IMR-90 (cell line): ENCODE measurements at regions of chr10 and their contacts with region 1.

Region 1: DNA sequence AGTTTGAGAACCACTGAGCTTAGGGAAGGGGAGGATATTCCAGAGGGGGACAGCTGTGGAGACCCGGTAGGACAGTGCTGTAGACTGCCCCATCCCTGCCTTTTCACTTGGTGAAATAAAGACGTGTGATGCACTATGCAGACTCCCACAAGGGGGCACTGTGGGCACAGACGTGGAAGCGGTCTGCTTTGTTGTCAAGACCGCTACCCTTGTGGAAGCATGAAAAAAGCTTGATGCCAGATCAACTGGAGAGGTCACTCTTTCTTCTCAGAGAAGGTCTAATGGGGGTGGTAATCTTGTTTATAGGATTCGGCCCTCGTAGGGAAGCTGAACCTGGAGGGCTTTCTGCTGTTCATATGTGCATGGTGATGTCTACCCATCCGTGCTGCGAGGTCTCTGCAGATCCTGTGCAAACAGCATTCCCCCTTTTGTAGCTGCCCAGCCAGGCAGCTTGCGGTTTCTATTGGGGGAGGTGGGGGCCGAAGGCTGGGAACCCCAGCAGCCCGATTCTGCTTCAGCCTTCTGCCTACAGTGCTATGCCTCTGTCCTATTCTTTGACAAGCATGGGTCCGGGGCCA is 13.7 kb downstream of the RPS24 start:
- DNase-seq: peak; percentile 87
- ATAC-seq: peak; percentile 87
- H3K4me3 ChIP-seq: no peak overlapping the region
- H3K27ac ChIP-seq: no peak overlapping the region
- H3K4me1 ChIP-seq: peaks cover 15% of the 10 kb centered on the region
- H3K27me3 ChIP-seq: no peaks in the 10 kb centered on the region
- CTCF ChIP-seq: peak; percentile 96
- POLR2A ChIP-seq: no peak
- RAD21 ChIP-seq: peak; percentile 98

Region 2: GRCh38 chr10:77926566-77927401 is 120.6 kb before region 1 on chr10 and contains the start of gene DLG5:
- CTCF ChIA-PET with region 1: no interaction called
- POLR2A ChIA-PET with region 1: interaction called, 11 read pairs
- dilution Hi-C with region 1: no loop called
- in situ Hi-C with region 1: no loop called
- intact Hi-C with region 1: no loop called
- DNase-seq: peak; percentile 52
- ATAC-seq: peak; percentile 94
- H3K4me3 ChIP-seq: peak within 1 kb of the TSS; percentile 99
- H3K27ac ChIP-seq: peak within 1 kb of the TSS; percentile 76
- H3K4me1 ChIP-seq: peaks cover 7% of the 10 kb centered on the region
- H3K27me3 ChIP-seq: no peaks in the 10 kb centered on the region
- CTCF ChIP-seq: no peak
- POLR2A ChIP-seq: 0 out of 2 replicates have a peak, but pooled peaks have one; percentile 32
- RAD21 ChIP-seq: no peak
- total RNA-seq, gene DLG5: 12.7 and 14.7 TPM in 2 replicates

Region 3: GRCh38 chr10:78302989-78303854 is 255.8 kb after region 1 on chr10:
- CTCF ChIA-PET with region 1: no interaction called
- POLR2A ChIA-PET with region 1: no interaction called
- dilution Hi-C with region 1: no loop called
- in situ Hi-C with region 1: loop called (anchors 10 kb)
- intact Hi-C with region 1: loop called (anchors 1 kb)
- DNase-seq: peak; percentile 85
- ATAC-seq: peak; percentile 100
- H3K4me3 ChIP-seq: peak overlapping the region; percentile 62
- H3K27ac ChIP-seq: peak overlapping the region; percentile 69
- H3K4me1 ChIP-seq: peaks cover 3% of the 10 kb centered on the region; the same call in 1 of the 2 replicates
- H3K27me3 ChIP-seq: 0 out of 2 replicates have a peak, but pooled peaks cover 2% of the 10 kb centered on the region
- CTCF ChIP-seq: peak; percentile 75
- POLR2A ChIP-seq: peak; percentile 63; the same call in 1 of the 2 replicates
- RAD21 ChIP-seq: peak; percentile 77

Region 4: GRCh38 chr10:78657163-78657861 is 609.9 kb after region 1 on chr10:
- CTCF ChIA-PET with region 1: interaction called, 3 read pairs
- POLR2A ChIA-PET with region 1: no interaction called
- dilution Hi-C with region 1: no loop called
- in situ Hi-C with region 1: loop called (anchors 10 kb)
- intact Hi-C with region 1: loop called (anchors 1 kb)
- DNase-seq: peak; percentile 43
- ATAC-seq: peak; percentile 88
- H3K4me3 ChIP-seq: no peak overlapping the region
- H3K27ac ChIP-seq: no peak overlapping the region
- H3K4me1 ChIP-seq: 0 out of 2 replicates have a peak, but pooled peaks cover 2% of the 10 kb centered on the region
- H3K27me3 ChIP-seq: peaks cover 5% of the 10 kb centered on the region; the same call in 1 of the 2 replicates
- CTCF ChIP-seq: peak; percentile 73
- POLR2A ChIP-seq: no peak
- RAD21 ChIP-seq: peak; percentile 78

Region 5: DNA sequence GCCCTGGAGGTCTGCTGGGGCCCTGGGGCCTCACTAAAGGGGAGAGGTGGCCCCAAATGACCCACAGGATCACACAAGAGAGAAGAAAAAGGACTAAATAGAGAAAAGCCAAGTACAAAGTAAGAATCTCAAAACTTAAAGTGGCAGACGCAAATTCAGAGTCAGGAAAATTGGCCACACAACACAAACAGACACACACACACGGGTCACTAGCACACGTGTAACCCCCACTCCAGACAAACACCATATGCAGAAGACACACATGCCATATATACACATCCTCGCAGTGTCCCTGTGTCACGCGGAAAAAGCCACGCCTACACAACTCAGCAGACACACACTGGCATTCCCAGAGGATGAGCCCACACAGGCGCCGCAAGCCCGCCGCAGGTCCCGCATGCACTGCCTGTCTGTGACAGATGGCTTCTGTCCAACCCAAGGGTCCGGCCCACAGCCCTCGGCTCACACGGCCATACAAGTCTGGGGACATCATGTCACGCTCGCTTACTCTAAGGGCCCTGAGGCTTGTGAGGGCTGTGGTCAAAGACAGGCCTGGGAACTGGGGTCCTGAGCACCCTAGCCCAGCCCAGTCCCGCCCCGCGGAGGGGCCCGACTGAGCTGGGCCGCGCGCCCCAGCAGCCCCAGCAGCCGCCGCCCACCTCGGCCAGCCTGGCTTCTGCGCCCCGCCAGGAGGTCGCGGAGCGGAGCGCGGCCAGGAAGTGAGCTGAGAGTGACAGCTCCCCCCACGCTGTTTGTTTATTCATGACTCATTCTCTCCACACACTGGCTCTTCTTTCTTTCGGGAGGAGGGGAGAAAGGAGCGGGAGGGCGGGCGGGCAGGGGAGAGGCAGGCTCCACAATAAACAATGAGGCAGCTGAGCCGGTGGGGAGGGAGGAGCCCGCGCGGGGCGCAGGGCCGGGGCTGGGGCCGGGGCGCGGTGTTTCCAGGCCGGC is 925.8 kb after region 1 on chr10:
- CTCF ChIA-PET with region 1: no interaction called
- POLR2A ChIA-PET with region 1: no interaction called
- dilution Hi-C with region 1: no loop called
- in situ Hi-C with region 1: no loop called
- intact Hi-C with region 1: loop called (anchors 5 kb)
- DNase-seq: peak; percentile 95
- ATAC-seq: peak; percentile 69
- H3K4me3 ChIP-seq: 0 out of 2 replicates have a peak overlapping the region, but pooled peaks have one; percentile 3
- H3K27ac ChIP-seq: peak overlapping the region; percentile 98
- H3K4me1 ChIP-seq: peaks cover 38% of the 10 kb centered on the region
- H3K27me3 ChIP-seq: no peaks in the 10 kb centered on the region
- CTCF ChIP-seq: no peak
- POLR2A ChIP-seq: peak; percentile 69
- RAD21 ChIP-seq: no peak; the same call in 1 of the 2 replicates